ENCODE measurements at regions of chr17 and their contacts with region 1.

Region 1: GRCh38 chr17:19513897-19514488 is 19.7 kb upstream of the SLC47A1 start:
- DNase-seq: peak; percentile 76 to 80
- H3K4me3 ChIP-seq: no peak overlapping the region
- H3K27ac ChIP-seq: peak overlapping the region; percentile 77 to 85
- H3K4me1 ChIP-seq: peaks cover 0 to 3% of the 10 kb centered on the region in 2 donors
- H3K27me3 ChIP-seq: no peaks in the 10 kb centered on the region
- CTCF ChIP-seq: peak; percentile 90 to 95 (median 92)
- POLR2A ChIP-seq: no peak

Region 2: GRCh38 chr17:19377602-19378392 is 136.2 kb before region 1 on chr17:
- intact Hi-C with region 1: loop called (anchors 10 kb)
- DNase-seq: peak; percentile 98 to 99
- H3K4me3 ChIP-seq: peak overlapping the region; percentile 62 to 98
- H3K27ac ChIP-seq: peak overlapping the region; percentile 93 to 97
- H3K4me1 ChIP-seq: peaks cover 5 to 6% of the 10 kb centered on the region in 2 donors
- H3K27me3 ChIP-seq: no peaks in the 10 kb centered on the region
- CTCF ChIP-seq: peak in 2 of 4 experiments; percentile 20 to 21
- POLR2A ChIP-seq: peak; percentile 54 to 78

Region 3: GRCh38 chr17:19766422-19767270 is 252.7 kb after region 1 on chr17:
- intact Hi-C with region 1: loop called (anchors 5 kb)
- DNase-seq: peak; percentile 74 to 84
- H3K4me3 ChIP-seq: no peak overlapping the region
- H3K27ac ChIP-seq: no peak overlapping the region
- H3K4me1 ChIP-seq: no peaks in the 10 kb centered on the region
- H3K27me3 ChIP-seq: no peaks in the 10 kb centered on the region
- CTCF ChIP-seq: peak; percentile 97 to 98 (median 98)
- POLR2A ChIP-seq: peak in 1 of 2 donors; percentile 9

Measured in uterus (tissue), 4 donors.